Endothelial cell of umbilical vein (primary cell): ENCODE measurements at regions of chr2 and their contacts with region 1.

Region 1: DNA sequence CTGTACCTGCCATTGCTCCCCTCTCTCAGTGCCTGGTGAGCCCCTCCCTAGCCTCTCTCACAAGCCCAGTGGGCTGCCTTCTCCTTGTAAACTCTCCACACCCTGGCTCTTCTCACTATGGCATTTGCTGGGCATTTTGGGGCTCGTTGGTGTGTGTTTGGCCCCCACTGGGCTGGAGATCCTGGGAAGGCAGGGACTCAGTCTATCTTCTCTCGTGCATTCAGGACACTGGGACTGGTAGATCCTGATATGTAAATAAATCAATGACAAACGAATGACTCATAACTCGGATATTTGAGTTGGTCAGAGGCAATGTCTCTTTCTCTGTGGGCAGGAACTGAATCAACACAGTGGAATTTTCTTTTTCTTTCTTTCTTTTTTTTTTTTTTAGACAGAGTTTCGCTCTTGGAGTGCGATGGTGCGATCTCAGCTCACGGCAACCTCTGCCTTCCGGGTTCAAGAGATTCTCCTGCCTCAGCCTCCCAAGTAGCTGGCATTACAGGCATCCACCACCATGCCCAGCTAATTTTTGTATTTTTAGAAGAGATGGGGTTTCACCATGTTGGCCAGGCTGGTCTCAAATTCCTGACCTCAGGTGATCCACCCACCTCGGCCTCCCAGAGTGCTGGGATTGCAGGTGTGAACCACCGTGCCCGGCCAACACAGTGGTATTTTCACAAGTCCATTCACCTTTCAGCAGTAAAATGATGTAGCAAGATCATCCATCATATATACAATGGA is 144.6 kb upstream of the SPRED2 start:
- DNase-seq: peak; percentile 87
- H3K4me3 ChIP-seq: no peak overlapping the region
- H3K27ac ChIP-seq: peak overlapping the region; percentile 88
- H3K4me1 ChIP-seq: peaks cover 19% of the 10 kb centered on the region
- H3K27me3 ChIP-seq: no peaks in the 10 kb centered on the region
- CTCF ChIP-seq: no peak
- POLR2A ChIP-seq: no peak

Region 2: DNA sequence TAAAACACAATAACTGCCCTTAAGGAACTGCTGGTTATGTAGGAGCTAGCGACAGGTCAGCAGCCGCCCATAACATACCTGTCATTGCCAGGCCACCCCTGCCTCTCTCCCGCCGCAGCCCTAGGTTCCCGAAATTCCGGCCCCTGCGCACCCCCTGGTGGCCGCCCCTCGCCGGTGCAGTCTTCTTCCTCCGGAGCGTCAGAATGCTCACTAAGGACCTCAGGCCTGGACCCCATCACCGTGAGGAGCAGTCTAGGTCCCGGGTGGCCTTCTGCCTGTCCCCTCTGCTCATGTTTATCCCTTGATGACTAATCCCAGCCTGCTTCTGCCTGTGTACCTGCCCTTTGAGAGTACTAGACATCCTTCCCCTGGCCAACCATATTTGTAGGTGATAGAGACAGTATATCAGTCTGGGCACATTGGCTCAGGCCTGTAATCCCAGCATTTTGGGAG is 703.5 kb before region 1 on chr2:
- CTCF ChIA-PET with region 1: no interaction called
- POLR2A ChIA-PET with region 1: no interaction called
- dilution Hi-C with region 1: no loop called
- intact Hi-C with region 1: loop called (anchors 2 kb)
- DNase-seq: peak; percentile 63
- H3K4me3 ChIP-seq: no peak overlapping the region
- H3K27ac ChIP-seq: no peak overlapping the region
- H3K4me1 ChIP-seq: peaks cover 10% of the 10 kb centered on the region
- H3K27me3 ChIP-seq: no peaks in the 10 kb centered on the region
- CTCF ChIP-seq: peak; percentile 95 to 96
- POLR2A ChIP-seq: no peak

Region 3: GRCh38 chr2:64988420-64989125 is 588.5 kb before region 1 on chr2:
- CTCF ChIA-PET with region 1: no interaction called
- POLR2A ChIA-PET with region 1: no interaction called
- dilution Hi-C with region 1: no loop called
- intact Hi-C with region 1: loop called (anchors 5 kb)
- DNase-seq: peak; percentile 79
- H3K4me3 ChIP-seq: peak overlapping the region; percentile 54 to 69 (median 67)
- H3K27ac ChIP-seq: peak overlapping the region; percentile 94
- H3K4me1 ChIP-seq: peaks cover 15% of the 10 kb centered on the region
- H3K27me3 ChIP-seq: peaks cover 0 to 4% of the 10 kb centered on the region in 2 experiments
- CTCF ChIP-seq: peak in 1 of 2 donors; percentile 51
- POLR2A ChIP-seq: peak; percentile 73

Region 4: GRCh38 chr2:65129826-65130663 is 447.0 kb before region 1 on chr2 and contains the start of gene RAB1A:
- CTCF ChIA-PET with region 1: no interaction called
- POLR2A ChIA-PET with region 1: no interaction called
- dilution Hi-C with region 1: no loop called
- intact Hi-C with region 1: loop called (anchors 1 kb)
- DNase-seq: peak; percentile 100
- H3K4me3 ChIP-seq: peak within 1 kb of the TSS; percentile 98 to 100 (median 100)
- H3K27ac ChIP-seq: peak within 1 kb of the TSS; percentile 87
- H3K4me1 ChIP-seq: peaks cover 33% of the 10 kb centered on the region
- H3K27me3 ChIP-seq: no peaks in the 10 kb centered on the region
- CTCF ChIP-seq: peak; percentile 8 to 55
- POLR2A ChIP-seq: peak; percentile 69
- total RNA-seq, gene RAB1A: 170 and 176 TPM in 2 replicates

Region 5: GRCh38 chr2:65554765-65555591 is 22.1 kb before region 1 on chr2:
- CTCF ChIA-PET with region 1: interaction called, 3 read pairs
- POLR2A ChIA-PET with region 1: no interaction called
- dilution Hi-C with region 1: no loop called
- intact Hi-C with region 1: loop called (anchors 2 kb)
- DNase-seq: no peak
- H3K4me3 ChIP-seq: no peak overlapping the region
- H3K27ac ChIP-seq: no peak overlapping the region
- H3K4me1 ChIP-seq: no peaks in the 10 kb centered on the region
- H3K27me3 ChIP-seq: peaks cover 16 to 19% of the 10 kb centered on the region in 2 experiments
- CTCF ChIP-seq: no peak
- POLR2A ChIP-seq: no peak

Region 6: GRCh38 chr2:65666156-65666725 is 89.2 kb after region 1 on chr2:
- CTCF ChIA-PET with region 1: no interaction called
- POLR2A ChIA-PET with region 1: no interaction called
- dilution Hi-C with region 1: no loop called
- intact Hi-C with region 1: no loop called
- DNase-seq: no peak
- H3K4me3 ChIP-seq: no peak overlapping the region
- H3K27ac ChIP-seq: no peak overlapping the region
- H3K4me1 ChIP-seq: no peaks in the 10 kb centered on the region
- H3K27me3 ChIP-seq: peaks cover 0 to 3% of the 10 kb centered on the region in 2 experiments
- CTCF ChIP-seq: no peak
- POLR2A ChIP-seq: no peak

Region 7: GRCh38 chr2:65918760-65919187 is 341.7 kb after region 1 on chr2:
- CTCF ChIA-PET with region 1: no interaction called
- POLR2A ChIA-PET with region 1: no interaction called
- dilution Hi-C with region 1: no loop called
- intact Hi-C with region 1: no loop called
- DNase-seq: no peak
- H3K4me3 ChIP-seq: no peak overlapping the region
- H3K27ac ChIP-seq: no peak overlapping the region
- H3K4me1 ChIP-seq: no peaks in the 10 kb centered on the region
- H3K27me3 ChIP-seq: no peaks in the 10 kb centered on the region
- CTCF ChIP-seq: no peak
- POLR2A ChIP-seq: no peak